Gastrocnemius medialis (tissue), 4 donors: ENCODE measurements at regions of chr1 and their contacts with region 1.

Region 1: GRCh38 chr1:64898107-64898845 is 68.1 kb downstream of the JAK1 start:
- DNase-seq: peak; percentile 96 to 98
- ATAC-seq: peak; percentile 96 to 98
- H3K4me3 ChIP-seq: peak overlapping the region in 2 of 4 donors; percentile 22 to 34
- H3K27ac ChIP-seq: peak overlapping the region; percentile 85 to 97 (median 92)
- H3K4me1 ChIP-seq: peaks cover 77 to 79% of the 10 kb centered on the region in 2 donors
- H3K27me3 ChIP-seq: no peaks in the 10 kb centered on the region
- CTCF ChIP-seq: no peak
- POLR2A ChIP-seq: peak in 1 of 2 donors; percentile 55

Region 2: DNA sequence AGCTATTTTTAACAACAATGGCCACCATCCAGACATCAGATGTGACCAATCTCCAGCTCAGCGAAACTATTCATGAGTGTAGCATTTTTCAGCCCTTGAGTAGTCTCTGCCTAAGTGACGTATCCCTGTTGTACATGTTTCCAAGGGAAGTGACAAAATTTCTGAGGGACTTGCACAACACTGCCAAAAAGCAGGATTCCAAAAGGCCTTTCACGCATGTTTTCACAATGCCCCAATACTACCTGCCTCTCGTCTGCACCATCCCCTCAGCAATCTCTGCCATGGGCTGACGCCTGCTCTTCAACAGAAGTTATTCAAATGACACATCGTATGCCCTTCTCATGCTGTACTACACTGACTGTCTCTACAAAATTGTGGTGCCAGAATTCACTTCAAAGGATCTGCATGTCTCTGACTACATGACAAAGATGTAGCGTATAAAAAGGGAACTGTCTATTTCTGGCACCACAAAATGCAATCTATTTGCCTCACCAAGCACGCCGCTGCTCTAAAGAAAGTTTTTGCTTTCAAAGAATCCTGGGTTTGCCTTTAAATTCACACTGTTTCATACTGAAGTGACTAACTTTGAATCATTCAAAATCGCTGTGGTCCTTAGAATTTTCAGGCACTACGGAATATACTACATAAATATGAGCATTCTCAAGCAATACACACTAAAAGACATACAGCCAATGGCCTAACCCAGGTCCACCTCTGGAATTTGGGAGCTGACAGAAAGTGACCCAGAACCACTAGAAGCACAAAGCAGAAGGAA is 35.2 kb after region 1 on chr1:
- in situ Hi-C with region 1: no loop called
- intact Hi-C with region 1: loop called (anchors 1 kb)
- DNase-seq: peak; percentile 48 to 66
- ATAC-seq: peak; percentile 59 to 60
- H3K4me3 ChIP-seq: peak overlapping the region; percentile 3 to 35 (median 14)
- H3K27ac ChIP-seq: peak overlapping the region; percentile 81 to 87 (median 82)
- H3K4me1 ChIP-seq: peaks cover 69 to 76% of the 10 kb centered on the region in 2 donors
- H3K27me3 ChIP-seq: no peaks in the 10 kb centered on the region
- CTCF ChIP-seq: no peak
- POLR2A ChIP-seq: no peak

Region 3: DNA sequence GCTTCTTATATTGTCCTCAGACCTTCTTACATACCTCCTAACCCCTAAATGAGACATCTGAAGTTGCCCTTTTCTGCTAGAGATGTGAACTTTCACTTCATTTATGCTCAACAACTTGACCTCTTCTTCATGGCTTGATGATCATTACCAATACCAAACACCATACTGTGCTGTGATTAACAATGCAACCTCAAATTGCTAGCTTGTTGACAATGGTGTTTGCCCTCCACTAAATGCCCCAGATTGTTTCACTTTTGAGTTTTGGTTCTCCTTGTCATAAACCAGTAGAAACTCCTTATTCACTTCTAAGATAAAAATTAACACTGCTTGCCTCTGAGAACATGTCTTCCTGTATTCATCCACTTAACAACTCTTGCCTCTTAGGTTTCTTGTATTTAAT is 62.5 kb after region 1 on chr1:
- in situ Hi-C with region 1: loop called in 1 of 4 experiments (anchors 5 kb)
- intact Hi-C with region 1: no loop called
- DNase-seq: no peak
- ATAC-seq: no peak
- H3K4me3 ChIP-seq: no peak overlapping the region
- H3K27ac ChIP-seq: peak overlapping the region in 2 of 4 donors; percentile 8 to 15
- H3K4me1 ChIP-seq: peaks cover 81 to 84% of the 10 kb centered on the region in 2 donors
- H3K27me3 ChIP-seq: no peaks in the 10 kb centered on the region
- CTCF ChIP-seq: no peak
- POLR2A ChIP-seq: no peak

Region 4: GRCh38 chr1:65036545-65037180 is 138.4 kb after region 1 on chr1:
- in situ Hi-C with region 1: no loop called
- intact Hi-C with region 1: no loop called
- DNase-seq: no peak
- ATAC-seq: no peak
- H3K4me3 ChIP-seq: no peak overlapping the region
- H3K27ac ChIP-seq: no peak overlapping the region
- H3K4me1 ChIP-seq: peaks cover 24 to 25% of the 10 kb centered on the region in 2 donors
- H3K27me3 ChIP-seq: no peaks in the 10 kb centered on the region
- CTCF ChIP-seq: no peak
- POLR2A ChIP-seq: no peak

Region 5: DNA sequence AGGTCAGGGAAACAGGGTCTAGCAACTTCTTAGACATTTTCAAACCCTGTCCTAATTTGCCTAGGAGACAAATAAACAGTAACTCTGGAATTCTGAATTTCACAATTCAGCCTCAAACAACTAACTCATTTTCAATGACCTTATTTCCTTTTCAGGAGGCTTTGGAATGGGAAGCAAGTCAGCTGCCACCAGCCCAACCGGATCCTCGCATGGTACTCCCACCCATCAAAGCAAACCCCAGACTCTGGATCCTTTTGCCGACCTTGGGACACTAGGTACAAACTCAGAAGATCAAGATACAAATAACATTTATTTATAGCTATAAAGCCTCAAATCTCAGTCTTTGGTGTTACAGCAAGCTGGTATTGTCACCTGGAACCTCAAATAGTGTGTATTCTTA is 503.3 kb after region 1 on chr1:
- in situ Hi-C with region 1: no loop called
- intact Hi-C with region 1: no loop called
- DNase-seq: no peak
- ATAC-seq: no peak
- H3K4me3 ChIP-seq: no peak overlapping the region
- H3K27ac ChIP-seq: no peak overlapping the region
- H3K4me1 ChIP-seq: no peaks in the 10 kb centered on the region
- H3K27me3 ChIP-seq: no peaks in the 10 kb centered on the region
- CTCF ChIP-seq: no peak
- POLR2A ChIP-seq: no peak